SK-MEL-5 (cell line): ENCODE measurements at regions of chr15 and their contacts with region 1.

Region 1: GRCh38 chr15:88454867-88455810 is 12.0 kb downstream of the MRPL46 start:
- DNase-seq: peak; percentile 79

Region 2: GRCh38 chr15:88208410-88208809 is 246.7 kb before region 1 on chr15:
- in situ Hi-C with region 1: no loop called
- DNase-seq: no peak

Region 3: DNA sequence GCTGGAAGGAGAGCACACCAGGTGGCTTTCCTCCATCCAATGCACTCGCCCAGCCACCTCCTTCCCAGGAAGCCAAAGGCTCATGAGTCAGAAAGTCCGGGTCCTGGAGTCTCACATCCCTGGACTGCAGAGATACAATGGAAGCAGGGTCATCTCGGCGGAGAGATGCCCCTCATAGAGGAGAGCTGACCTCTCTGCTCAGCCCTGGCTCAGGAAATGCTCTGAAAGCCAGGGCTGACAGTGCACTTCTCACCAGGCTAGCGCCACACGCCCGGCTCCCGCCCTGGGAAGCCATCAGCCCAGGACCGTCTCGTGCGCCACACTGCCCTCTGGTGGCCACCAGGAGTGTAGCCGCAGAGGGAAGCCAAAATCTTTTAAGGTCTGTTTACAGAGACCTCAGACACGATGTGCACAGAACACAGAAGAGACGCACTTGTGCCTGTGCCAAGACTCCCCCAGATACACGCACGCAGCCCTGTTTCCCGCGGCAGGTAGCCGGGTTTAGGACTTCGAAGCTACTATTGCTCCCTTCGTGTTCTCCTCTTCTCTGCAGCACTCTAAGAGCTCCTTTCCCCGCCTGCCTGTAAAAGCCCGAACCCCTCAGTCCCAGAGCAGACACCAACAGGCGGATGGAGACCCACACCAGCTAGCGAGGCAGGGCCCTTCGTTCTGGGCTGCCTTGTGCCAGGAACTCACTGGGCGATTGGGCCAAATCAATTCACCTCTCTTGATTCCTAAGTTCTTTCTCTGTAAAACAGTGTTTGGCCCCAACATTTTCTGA is 208.3 kb before region 1 on chr15:
- in situ Hi-C with region 1: loop called (anchors 10 kb)
- DNase-seq: peak; percentile 81

Region 4: DNA sequence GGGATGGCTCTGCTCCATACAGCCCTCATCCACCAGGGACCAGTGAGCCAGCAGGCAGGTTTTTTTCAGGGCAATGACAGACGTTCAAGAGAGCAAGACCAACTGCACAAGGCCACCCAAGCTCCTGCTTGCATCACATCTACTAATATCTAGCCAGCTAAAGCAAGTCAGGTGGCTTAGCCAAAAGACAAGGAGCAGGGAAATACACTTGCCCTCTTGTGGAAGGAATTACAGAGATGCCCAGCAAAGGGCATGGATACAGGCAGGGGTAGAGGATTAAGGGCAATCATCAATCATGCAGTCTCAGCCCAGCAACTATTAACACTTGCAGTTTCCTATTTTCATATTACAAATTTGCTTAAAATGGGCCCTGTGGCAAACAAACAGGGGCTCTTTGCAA is 117.1 kb before region 1 on chr15:
- in situ Hi-C with region 1: no loop called
- DNase-seq: peak; percentile 20